ENCODE measurements at regions of chr1 and their contacts with region 1.

Region 1: DNA sequence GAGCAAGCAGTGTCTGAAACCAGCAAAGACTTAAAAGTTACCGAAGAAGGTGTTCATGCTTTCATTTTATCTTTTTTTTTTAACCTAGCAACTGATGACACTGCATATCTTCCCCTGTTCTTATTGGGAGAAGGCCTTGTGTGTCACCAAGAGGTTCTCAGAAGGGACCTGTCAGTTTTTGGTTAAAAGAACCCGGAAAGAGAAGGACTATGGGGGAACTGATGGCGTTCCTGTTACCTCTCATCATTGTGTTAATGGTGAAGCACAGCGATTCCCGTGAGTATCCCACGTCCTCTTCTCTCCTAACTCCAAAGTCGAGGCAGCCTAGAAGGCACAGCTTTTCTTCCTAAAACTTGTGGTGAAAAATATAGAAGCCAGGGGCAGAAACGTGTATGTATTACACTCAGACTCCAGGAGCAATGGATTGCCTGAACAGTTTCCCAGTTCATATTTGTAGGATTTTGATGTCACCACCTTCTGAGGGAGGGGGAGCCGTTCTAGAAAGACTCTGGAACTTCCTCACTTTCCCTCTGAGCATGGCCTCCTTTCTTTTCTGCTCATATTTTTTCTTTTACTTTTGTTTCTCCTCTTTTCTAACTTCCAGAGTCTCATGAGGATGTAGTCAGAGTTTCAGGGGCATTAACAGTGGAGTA is at the start of gene MR1:
- DNase-seq: peak in 1 of 5 donors; percentile 39
- ATAC-seq: peak; percentile 87 to 92 (median 91)
- H3K4me3 ChIP-seq: peak within 1 kb of the TSS in 11 of 12 donors; percentile 26 to 69 (median 53)
- H3K27ac ChIP-seq: peak within 1 kb of the TSS; percentile 80 to 95 (median 85)
- H3K4me1 ChIP-seq: peaks cover 3 to 61% (median 17%) of the 10 kb centered on the region in 12 donors
- H3K27me3 ChIP-seq: no peaks in the 10 kb centered on the region
- CTCF ChIP-seq: no peak
- POLR2A ChIP-seq: peak in 1 of 2 donors; percentile 63
- total RNA-seq, gene MR1: 2.1 to 21.0 (median 3.8) TPM

Region 2: DNA sequence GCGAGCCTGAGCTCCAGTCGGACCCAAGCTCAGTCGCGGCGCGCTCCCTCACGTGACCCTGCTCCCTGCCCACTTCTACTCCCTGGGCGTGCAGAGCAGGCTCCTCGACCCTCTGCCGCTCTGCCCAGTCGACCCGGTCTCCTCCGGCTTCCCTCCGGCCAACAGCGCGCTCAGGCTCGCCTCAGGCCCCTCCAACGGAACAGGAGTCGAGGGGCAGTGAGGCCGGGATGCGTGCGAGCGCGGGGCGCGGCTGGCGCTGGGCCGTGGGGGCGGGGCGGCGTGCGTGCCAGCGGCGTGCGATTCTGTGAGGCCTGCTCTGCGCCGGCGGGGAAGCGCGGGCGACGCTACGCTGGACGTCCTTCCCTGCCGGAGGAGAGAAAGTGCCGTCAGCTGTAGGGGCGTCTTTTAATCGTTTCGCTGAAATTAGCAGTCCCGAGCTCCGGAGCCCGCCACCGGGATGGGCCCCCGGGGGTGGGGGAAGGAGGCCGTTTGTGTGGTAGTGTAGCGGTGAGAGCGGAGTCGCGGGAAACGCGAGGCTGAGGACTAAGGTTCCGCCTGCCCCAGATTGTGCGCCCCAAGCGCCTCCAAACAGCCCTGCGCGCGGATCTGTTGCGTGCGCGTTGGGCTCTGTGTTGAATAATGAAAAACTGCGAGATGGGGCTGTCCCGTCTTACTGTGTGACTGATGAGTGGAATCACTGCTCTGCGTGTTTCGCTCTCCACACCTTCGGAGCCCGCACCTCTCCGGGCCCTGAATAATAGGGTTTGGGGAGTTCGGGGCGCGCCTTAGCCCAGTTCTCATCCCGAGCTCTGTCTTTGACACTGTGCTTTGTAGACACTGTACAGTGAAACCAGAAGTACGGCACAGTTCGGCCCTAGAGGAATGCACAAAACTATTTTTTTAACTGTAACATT is 531.3 kb before region 1 on chr1 and contains the start of gene ACBD6:
- intact Hi-C with region 1: loop called in 2 of 10 experiments (anchors 10 kb)
- DNase-seq: peak; percentile 82 to 91 (median 84)
- ATAC-seq: peak; percentile 87 to 96 (median 94)
- H3K4me3 ChIP-seq: peak within 1 kb of the TSS; percentile 75 to 95 (median 90)
- H3K27ac ChIP-seq: peak within 1 kb of the TSS; percentile 84 to 95 (median 92)
- H3K4me1 ChIP-seq: peaks cover 0 to 32% (median 15%) of the 10 kb centered on the region in 12 donors
- H3K27me3 ChIP-seq: no peaks in the 10 kb centered on the region
- CTCF ChIP-seq: peak in 4 of 12 donors; percentile 20 to 28 (median 24)
- POLR2A ChIP-seq: peak in 1 of 2 donors; percentile 53
- total RNA-seq, gene ACBD6: 18.6 to 24.6 (median 21.5) TPM

Region 3: DNA sequence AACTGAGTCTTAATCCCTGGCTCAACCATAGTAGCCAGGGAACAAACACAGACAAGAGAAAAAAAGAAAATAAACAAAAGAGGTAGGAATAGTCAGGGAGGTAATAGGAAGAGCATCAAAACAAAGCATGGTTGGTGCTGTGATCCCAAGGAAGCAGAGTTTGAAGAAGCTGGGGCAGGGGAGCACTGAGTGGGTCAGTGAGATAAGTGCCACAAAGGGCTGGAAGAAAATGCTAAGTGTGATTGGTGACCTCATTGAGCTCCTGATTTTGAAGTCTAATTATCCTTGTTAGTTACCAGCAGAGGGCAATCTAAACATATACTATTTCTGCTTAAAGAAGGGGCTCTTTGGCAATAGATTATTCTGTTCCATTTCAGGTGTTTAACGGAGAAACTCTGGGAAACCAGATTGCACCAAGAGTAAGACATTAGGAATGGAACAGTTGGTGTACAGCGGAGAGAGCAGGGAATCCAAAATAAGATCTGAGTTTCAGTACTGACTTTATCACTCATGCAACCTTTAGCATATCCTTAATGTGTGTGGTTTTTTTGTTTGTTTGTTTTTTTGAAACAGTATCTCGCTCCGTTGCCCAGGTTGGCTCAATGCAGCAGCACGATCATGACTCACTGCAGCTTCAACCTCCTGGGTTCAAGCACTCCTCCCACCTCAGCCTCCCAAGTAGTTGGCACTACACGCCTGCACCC is 152.0 kb before region 1 on chr1:
- intact Hi-C with region 1: loop called in 2 of 10 experiments (anchors 10 kb)
- DNase-seq: no peak
- ATAC-seq: peak in 3 of 4 donors; percentile 45 to 69 (median 55)
- H3K4me3 ChIP-seq: no peak overlapping the region
- H3K27ac ChIP-seq: peak overlapping the region in 1 of 12 donors; percentile 33
- H3K4me1 ChIP-seq: peaks cover 0 to 8% (median 0%) of the 10 kb centered on the region in 12 donors
- H3K27me3 ChIP-seq: no peaks in the 10 kb centered on the region
- CTCF ChIP-seq: peak in 11 of 12 donors; percentile 28 to 63 (median 47)
- POLR2A ChIP-seq: no peak

Region 4: GRCh38 chr1:180912801-180913565 is 120.9 kb before region 1 on chr1 and contains the start of gene KIAA1614:
- intact Hi-C with region 1: loop called in 1 of 10 experiments (anchors 10 kb)
- DNase-seq: peak; percentile 49 to 75 (median 54)
- ATAC-seq: peak; percentile 16 to 83 (median 73)
- H3K4me3 ChIP-seq: peak within 1 kb of the TSS; percentile 52 to 88 (median 70)
- H3K27ac ChIP-seq: peak within 1 kb of the TSS; percentile 82 to 94 (median 88)
- H3K4me1 ChIP-seq: peaks cover 0 to 32% (median 15%) of the 10 kb centered on the region in 12 donors
- H3K27me3 ChIP-seq: peaks cover 0 to 18% (median 0%) of the 10 kb centered on the region in 9 donors
- CTCF ChIP-seq: no peak
- POLR2A ChIP-seq: no peak
- total RNA-seq, gene KIAA1614: 4.3 to 12.1 (median 6.5) TPM

Region 5: GRCh38 chr1:181142096-181142958 is 108.4 kb after region 1 on chr1:
- intact Hi-C with region 1: loop called in 9 of 10 experiments (anchors 1 to 5 kb)
- DNase-seq: peak; percentile 86 to 93 (median 88)
- ATAC-seq: peak; percentile 94 to 96 (median 95)
- H3K4me3 ChIP-seq: peak overlapping the region in 9 of 12 donors; percentile 15 to 52 (median 33)
- H3K27ac ChIP-seq: peak overlapping the region in 5 of 12 donors; percentile 1 to 60 (median 30)
- H3K4me1 ChIP-seq: peaks cover 0 to 48% (median 26%) of the 10 kb centered on the region in 12 donors
- H3K27me3 ChIP-seq: no peaks in the 10 kb centered on the region
- CTCF ChIP-seq: peak; percentile 91 to 99 (median 97)
- POLR2A ChIP-seq: no peak

Measured in heart left ventricle (tissue), 16 donors.